ENCODE measurements at regions of chr10 and their contacts with region 1.

Region 1: DNA sequence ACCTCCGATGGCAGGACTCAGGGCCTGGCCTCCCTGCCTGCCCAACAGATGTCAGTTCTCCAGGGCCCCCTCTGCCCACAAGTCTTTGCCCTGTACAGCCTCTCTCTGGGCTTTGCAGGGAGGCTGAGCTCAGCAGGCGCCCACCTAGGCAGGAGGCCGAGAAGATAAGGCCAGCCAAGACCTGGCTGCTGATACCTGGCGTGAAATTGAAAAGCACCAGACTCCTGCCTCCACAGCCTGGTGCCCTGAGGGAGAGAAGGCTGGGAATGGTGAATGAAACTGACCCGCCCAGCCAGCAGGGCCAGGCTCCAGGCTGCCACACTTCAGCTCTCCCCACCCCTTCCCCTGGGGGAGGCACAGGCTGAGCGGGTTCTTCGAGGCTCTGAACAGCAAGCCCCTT is 145.8 kb downstream of the CDH23 start:
- DNase-seq: no peak
- H3K4me3 ChIP-seq: no peak overlapping the region
- H3K27ac ChIP-seq: no peak overlapping the region
- H3K4me1 ChIP-seq: peaks cover 9 to 34% (median 20%) of the 10 kb centered on the region in 4 experiments
- H3K27me3 ChIP-seq: no peaks in the 10 kb centered on the region; a peak in 1 of 7 replicates
- CTCF ChIP-seq: no peak
- EP300 ChIP-seq: no peak
- POLR2A ChIP-seq: no peak
- RAD21 ChIP-seq: no peak

Region 2: GRCh38 chr10:71522442-71523144 is 19.9 kb before region 1 on chr10:
- CTCF ChIA-PET with region 1: interaction called, 12 read pairs
- POLR2A ChIA-PET with region 1: no interaction called
- DNase-seq: no peak
- H3K4me3 ChIP-seq: no peak overlapping the region
- H3K27ac ChIP-seq: no peak overlapping the region
- H3K4me1 ChIP-seq: peaks cover 0 to 3% (median 0%) of the 10 kb centered on the region in 4 experiments; a peak in 3 of 7 replicates
- H3K27me3 ChIP-seq: no peaks in the 10 kb centered on the region; a peak in 2 of 7 replicates
- CTCF ChIP-seq: peak; percentile 24 to 41 (median 37); a peak in 3 of 4 replicates
- EP300 ChIP-seq: no peak
- POLR2A ChIP-seq: no peak
- RAD21 ChIP-seq: peak; percentile 24 to 39; a peak in 3 of 4 replicates

Region 3: GRCh38 chr10:71531485-71532446 is 10.7 kb before region 1 on chr10:
- CTCF ChIA-PET with region 1: interaction called, 13 read pairs
- POLR2A ChIA-PET with region 1: interaction called, 6 read pairs
- DNase-seq: no peak
- H3K4me3 ChIP-seq: no peak overlapping the region
- H3K27ac ChIP-seq: no peak overlapping the region
- H3K4me1 ChIP-seq: peaks cover 4 to 20% (median 16%) of the 10 kb centered on the region in 4 experiments
- H3K27me3 ChIP-seq: no peaks in the 10 kb centered on the region
- CTCF ChIP-seq: no peak
- EP300 ChIP-seq: no peak
- POLR2A ChIP-seq: no peak
- RAD21 ChIP-seq: no peak

Region 4: DNA sequence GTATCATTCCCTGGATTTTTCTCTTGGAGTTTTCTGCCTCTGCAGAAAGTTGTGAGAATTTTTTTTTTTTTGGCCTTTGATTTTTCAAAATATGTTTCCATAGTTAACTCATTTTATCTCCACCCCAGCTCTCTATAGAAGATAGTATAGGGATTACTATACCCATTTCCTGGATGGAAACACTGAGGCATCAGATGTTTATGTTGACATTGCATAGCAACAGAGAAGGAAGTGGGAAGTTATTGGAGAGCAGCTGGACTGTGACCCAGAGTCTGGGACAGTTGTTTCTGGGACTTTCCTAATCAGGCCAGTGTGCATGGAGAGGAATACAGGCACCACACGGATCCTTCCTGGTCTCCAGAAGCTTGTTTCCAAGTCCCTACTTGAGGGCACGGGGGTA is 12.2 kb after region 1 on chr10:
- CTCF ChIA-PET with region 1: interaction called, 21 read pairs
- POLR2A ChIA-PET with region 1: interaction called, 4 read pairs
- DNase-seq: no peak
- H3K4me3 ChIP-seq: no peak overlapping the region
- H3K27ac ChIP-seq: no peak overlapping the region
- H3K4me1 ChIP-seq: peaks cover 3 to 16% (median 11%) of the 10 kb centered on the region in 4 experiments
- H3K27me3 ChIP-seq: no peaks in the 10 kb centered on the region
- CTCF ChIP-seq: no peak
- EP300 ChIP-seq: no peak
- POLR2A ChIP-seq: no peak
- RAD21 ChIP-seq: no peak

Region 5: DNA sequence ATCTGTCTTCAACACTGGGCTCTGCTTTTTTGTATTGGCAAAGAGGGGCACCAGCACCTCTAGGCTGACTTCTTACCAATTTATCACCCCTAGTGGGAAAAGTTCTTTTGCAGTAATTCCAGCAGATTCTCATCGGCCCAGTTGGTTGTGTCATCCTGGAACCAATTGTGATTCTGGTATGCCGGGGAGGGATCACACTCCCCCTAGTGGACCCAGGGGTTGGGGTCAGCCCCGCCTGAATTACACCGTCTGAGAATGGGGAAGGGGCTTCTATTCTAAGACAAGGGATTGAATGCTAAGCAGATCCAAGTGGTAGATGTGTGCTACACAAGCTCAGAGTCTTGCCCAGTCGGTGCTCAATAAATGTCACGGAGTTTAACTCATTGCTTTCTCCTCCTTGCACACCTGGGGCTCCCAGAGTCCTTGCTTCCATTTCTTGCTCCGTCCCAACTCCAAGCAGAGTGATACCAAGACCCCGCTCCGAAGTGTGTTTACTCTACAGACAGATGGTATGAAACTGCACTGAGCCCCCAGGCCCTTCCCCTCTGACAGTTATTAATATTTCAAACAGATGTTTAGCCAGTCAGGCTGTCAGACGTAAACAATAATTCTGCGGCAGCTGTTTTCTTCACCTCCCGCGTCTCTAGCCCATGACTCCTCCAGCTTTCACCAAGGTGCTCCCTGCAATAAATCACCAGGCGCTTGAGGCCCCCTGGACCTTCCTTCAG is 105.2 kb after region 1 on chr10:
- CTCF ChIA-PET with region 1: no interaction called
- POLR2A ChIA-PET with region 1: no interaction called
- DNase-seq: peak in 1 of 2 experiments; percentile 78
- H3K4me3 ChIP-seq: no peak overlapping the region
- H3K27ac ChIP-seq: no peak overlapping the region
- H3K4me1 ChIP-seq: peaks cover 10 to 14% (median 10%) of the 10 kb centered on the region in 4 experiments
- H3K27me3 ChIP-seq: no peaks in the 10 kb centered on the region
- CTCF ChIP-seq: peak; percentile 73 to 84 (median 83)
- EP300 ChIP-seq: no peak
- POLR2A ChIP-seq: no peak
- RAD21 ChIP-seq: peak; percentile 46 to 74